ENCODE measurements at regions of chr5 and their contacts with region 1.

Region 1: DNA sequence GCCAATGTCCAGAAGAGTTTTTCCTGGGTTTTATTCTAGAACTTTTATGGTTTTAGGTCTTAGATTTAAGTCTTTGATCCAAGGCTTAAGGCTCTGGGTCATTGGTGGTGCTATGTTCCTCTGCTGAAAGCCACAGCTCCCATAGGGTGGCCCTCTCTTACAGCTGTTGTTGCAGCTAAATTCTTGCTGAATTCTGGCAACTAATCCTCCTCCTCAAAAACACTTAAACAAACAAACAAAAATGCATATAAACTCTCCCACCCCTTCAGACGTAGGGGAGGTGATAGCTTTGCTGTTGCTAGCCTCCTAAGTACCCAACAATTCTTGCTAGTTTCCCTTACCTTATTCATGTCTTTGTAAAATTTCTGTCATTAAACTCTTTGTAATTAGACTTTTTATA is 30.2 kb downstream of the IQGAP2 start:
- DNase-seq: no peak
- H3K4me3 ChIP-seq: no peak overlapping the region
- H3K27ac ChIP-seq: no peak overlapping the region
- H3K4me1 ChIP-seq: no peaks in the 10 kb centered on the region
- CTCF ChIP-seq: no peak

Region 2: DNA sequence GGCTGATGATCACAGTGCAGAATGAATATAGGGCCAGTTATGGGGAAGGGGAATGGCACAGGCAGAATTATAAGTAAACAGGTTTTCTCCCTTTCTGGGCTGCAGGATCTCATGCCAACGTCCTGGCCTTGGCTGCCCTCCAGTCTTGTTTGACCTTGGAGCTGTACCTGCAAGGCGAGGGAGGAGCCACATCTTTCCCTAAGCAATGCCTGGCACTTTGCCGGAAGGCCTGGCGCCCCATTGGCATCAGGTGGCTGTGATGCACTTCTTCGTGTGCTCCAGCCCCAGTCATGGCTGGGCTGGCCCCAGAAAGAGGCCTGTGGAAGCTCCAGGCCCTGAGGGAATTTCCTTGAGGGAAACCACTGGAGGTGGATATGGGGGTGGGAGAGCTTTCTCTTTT is 46.9 kb before region 1 on chr5:
- CTCF ChIA-PET with region 1: no interaction called
- POLR2A ChIA-PET with region 1: no interaction called
- intact Hi-C with region 1: no loop called
- DNase-seq: no peak
- H3K4me3 ChIP-seq: no peak overlapping the region
- H3K27ac ChIP-seq: no peak overlapping the region
- H3K4me1 ChIP-seq: peaks cover 3% of the 10 kb centered on the region
- CTCF ChIP-seq: no peak

Region 3: DNA sequence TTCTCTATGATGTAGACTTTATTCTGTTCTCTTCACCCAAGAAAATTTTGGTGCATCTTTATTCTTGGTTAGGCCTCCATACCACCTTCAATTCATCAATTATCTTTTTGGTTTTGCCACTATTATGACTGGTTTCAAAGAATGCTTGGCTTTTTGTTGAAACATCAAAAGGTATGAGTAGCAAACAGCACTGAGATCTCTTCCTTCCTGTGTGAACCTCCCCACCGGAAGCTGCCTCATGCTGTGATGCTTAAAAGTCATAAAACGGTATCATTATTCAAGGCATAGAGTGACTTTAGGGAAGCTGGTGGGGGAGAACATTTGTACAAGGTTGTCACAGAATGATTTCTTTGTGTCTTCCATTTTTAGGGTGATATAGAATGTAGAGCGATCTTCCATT is 40.4 kb after region 1 on chr5:
- CTCF ChIA-PET with region 1: no interaction called
- POLR2A ChIA-PET with region 1: interaction called, 3 read pairs
- intact Hi-C with region 1: loop called (anchors 5 kb)
- DNase-seq: peak; percentile 65
- H3K4me3 ChIP-seq: no peak overlapping the region
- H3K27ac ChIP-seq: peak overlapping the region; percentile 4
- H3K4me1 ChIP-seq: peaks cover 16% of the 10 kb centered on the region
- CTCF ChIP-seq: no peak

Region 4: GRCh38 chr5:76500633-76501393 is 67.6 kb after region 1 on chr5:
- CTCF ChIA-PET with region 1: no interaction called
- POLR2A ChIA-PET with region 1: no interaction called
- intact Hi-C with region 1: no loop called
- DNase-seq: no peak
- H3K4me3 ChIP-seq: no peak overlapping the region
- H3K27ac ChIP-seq: no peak overlapping the region
- H3K4me1 ChIP-seq: no peaks in the 10 kb centered on the region
- CTCF ChIP-seq: no peak

Region 5: DNA sequence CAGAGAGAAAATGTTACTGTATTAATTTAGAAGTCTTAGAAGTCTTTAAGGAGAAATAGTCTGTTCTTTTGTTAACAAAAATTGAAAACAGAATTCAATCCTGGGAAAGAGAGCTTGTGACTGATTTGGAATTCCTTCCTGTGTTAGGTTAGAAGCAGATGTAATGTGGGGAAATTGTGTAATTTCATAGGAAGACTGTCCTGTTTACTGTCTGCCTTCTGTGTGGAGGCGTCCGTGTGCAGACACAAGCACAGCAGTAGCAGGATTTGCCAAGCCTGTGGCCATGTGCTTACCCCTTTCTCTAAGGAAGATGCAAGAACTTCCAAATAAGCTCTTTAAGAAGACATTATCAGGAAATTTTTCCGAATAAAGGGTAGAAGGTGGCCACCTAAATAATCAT is 246.0 kb after region 1 on chr5:
- CTCF ChIA-PET with region 1: no interaction called
- POLR2A ChIA-PET with region 1: no interaction called
- intact Hi-C with region 1: no loop called
- DNase-seq: no peak
- H3K4me3 ChIP-seq: no peak overlapping the region
- H3K27ac ChIP-seq: no peak overlapping the region
- H3K4me1 ChIP-seq: no peaks in the 10 kb centered on the region
- CTCF ChIP-seq: no peak